ENCODE measurements at regions of chr17 and their contacts with region 1.

Region 1: DNA sequence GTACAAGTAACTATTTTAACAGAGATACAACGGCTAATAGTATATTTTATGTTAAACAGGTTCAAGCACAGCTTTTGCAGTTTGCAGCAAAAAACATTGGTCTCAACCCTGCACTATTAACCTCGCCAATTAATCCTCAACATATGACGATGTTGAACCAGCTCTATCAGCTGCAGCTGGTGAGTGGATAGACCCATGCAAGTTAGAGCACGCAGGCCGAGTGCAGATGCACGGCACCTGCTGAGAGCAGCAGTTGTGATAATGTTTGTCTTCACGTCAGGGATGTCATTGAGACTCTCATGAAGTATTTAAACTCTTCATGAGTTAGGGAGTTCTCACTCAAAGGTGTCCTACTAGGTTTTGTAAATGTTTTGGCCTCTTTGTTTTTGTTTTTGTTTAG is 45.6 kb downstream of the TMC6 start:
- H3K4me3 ChIP-seq: no peak overlapping the region
- H3K27ac ChIP-seq: no peak overlapping the region
- H3K4me1 ChIP-seq: no peaks in the 10 kb centered on the region
- CTCF ChIP-seq: no peak

Region 2: DNA sequence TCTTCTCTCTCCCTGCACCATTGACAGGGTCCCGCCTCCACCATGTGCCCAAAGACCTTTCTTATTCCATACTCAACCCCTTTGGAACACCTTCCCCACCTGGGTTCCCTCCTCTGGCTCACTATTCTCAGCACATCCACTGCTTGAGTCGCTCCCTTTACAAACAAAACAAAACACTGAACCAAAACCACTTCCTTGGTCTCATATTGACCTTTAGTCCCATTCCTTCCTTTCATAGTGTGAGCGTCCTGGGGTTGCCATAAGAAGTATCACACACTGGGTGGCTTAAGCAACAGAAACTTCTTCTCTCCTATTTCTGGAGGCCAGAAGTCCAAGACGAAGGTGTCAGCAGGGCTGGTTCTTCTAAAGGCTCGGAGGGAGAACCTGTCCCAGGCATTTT is 130.6 kb before region 1 on chr17:
- CTCF ChIA-PET with region 1: no interaction called
- POLR2A ChIA-PET with region 1: no interaction called
- H3K4me3 ChIP-seq: no peak overlapping the region
- H3K27ac ChIP-seq: no peak overlapping the region
- H3K4me1 ChIP-seq: no peaks in the 10 kb centered on the region
- CTCF ChIP-seq: no peak

Region 3: DNA sequence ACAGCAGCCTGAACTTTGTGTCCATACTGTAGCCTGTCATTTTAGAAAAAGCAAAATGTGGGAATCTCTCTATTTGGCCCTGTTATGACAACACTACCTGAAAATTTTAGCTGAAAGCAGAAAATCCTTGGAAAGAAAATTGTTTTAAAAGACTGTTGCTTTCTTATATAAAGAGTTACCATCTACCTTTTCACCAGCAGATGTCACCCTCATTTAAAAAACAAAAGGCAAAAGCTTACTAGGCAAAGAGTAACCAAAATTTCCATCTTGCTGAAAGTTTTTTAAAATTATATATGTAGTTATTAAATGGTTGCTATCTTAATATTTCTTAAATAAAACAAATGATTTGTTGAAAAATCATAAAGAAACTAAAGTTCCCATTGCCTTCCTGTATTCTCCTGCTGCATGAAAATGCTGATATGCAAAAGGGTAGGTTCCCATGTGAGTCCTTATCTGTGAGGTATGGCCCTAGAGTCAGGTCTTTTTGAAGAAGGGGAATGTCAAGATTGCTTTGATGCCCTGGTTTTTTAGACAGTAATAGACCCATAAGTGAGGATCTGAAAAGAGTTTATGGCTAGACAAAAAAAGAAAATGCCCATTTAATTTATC is 63.5 kb before region 1 on chr17:
- CTCF ChIA-PET with region 1: interaction called, 32 read pairs
- POLR2A ChIA-PET with region 1: no interaction called
- H3K4me3 ChIP-seq: no peak overlapping the region
- H3K27ac ChIP-seq: no peak overlapping the region
- H3K4me1 ChIP-seq: no peaks in the 10 kb centered on the region
- CTCF ChIP-seq: 0 out of 2 replicates have a peak, but pooled peaks have one; percentile 13

Region 4: GRCh38 chr17:78058001-78058400 is 25.0 kb before region 1 on chr17:
- CTCF ChIA-PET with region 1: interaction called, 22 read pairs
- POLR2A ChIA-PET with region 1: no interaction called
- H3K4me3 ChIP-seq: no peak overlapping the region
- H3K27ac ChIP-seq: no peak overlapping the region
- H3K4me1 ChIP-seq: no peaks in the 10 kb centered on the region; the same call in none of the 2 replicates
- CTCF ChIP-seq: no peak

Region 5: GRCh38 chr17:78069695-78070094 is 13.3 kb before region 1 on chr17:
- CTCF ChIA-PET with region 1: interaction called, 20 read pairs
- POLR2A ChIA-PET with region 1: no interaction called
- H3K4me3 ChIP-seq: no peak overlapping the region
- H3K27ac ChIP-seq: no peak overlapping the region
- H3K4me1 ChIP-seq: no peaks in the 10 kb centered on the region
- CTCF ChIP-seq: no peak

Region 6: GRCh38 chr17:78112518-78113226 is 29.7 kb after region 1 on chr17:
- CTCF ChIA-PET with region 1: interaction called, 14 read pairs
- POLR2A ChIA-PET with region 1: no interaction called
- H3K4me3 ChIP-seq: no peak overlapping the region
- H3K27ac ChIP-seq: no peak overlapping the region
- H3K4me1 ChIP-seq: no peaks in the 10 kb centered on the region
- CTCF ChIP-seq: peak; percentile 96

Region 7: GRCh38 chr17:78176548-78177025 is 93.6 kb after region 1 on chr17:
- CTCF ChIA-PET with region 1: interaction called, 13 read pairs
- POLR2A ChIA-PET with region 1: no interaction called
- H3K4me3 ChIP-seq: no peak overlapping the region
- H3K27ac ChIP-seq: no peak overlapping the region
- H3K4me1 ChIP-seq: no peaks in the 10 kb centered on the region; the same call in 1 of the 2 replicates
- CTCF ChIP-seq: peak; percentile 90

Measured in HEK293 (cell line).